ENCODE measurements at regions of chr3 and their contacts with region 1.

Region 1: DNA sequence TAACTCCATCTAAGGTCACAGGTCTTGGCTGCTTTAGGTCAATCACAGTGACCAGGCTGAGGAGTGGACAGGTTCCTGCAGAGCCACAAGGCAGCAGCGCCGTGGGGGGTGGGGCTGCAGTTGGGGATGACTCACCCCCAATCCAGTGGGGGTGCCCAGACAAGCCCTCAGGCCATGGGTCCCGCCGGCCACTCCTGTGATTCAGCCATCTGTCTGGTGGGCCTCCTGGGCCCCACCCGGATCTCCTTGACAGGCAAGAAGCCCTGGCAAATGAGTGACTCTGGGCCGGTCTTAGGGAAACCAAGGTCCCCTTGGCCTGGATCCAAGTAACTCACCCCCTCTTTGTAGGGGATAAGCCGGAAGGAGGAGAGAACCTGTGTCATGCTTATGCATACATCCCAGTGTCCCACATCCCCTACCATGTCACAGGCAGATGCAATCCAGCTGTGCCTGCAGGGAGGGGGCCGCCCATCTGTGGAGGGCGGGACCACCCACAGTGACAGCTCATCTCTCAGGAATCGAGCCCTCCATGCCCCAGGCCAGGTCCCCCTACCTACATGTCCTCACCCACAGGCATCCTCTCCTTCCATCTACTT is 495 bp upstream of the COL7A1 start:
- DNase-seq: peak; percentile 85
- H3K4me3 Mint-ChIP-seq: peak overlapping the region; percentile 48
- H3K27ac Mint-ChIP-seq: peak overlapping the region; percentile 68
- H3K4me1 Mint-ChIP-seq: peaks cover 51% of the 10 kb centered on the region
- H3K27me3 Mint-ChIP-seq: no peaks in the 10 kb centered on the region
- CTCF ChIP-seq: no peak

Region 2: DNA sequence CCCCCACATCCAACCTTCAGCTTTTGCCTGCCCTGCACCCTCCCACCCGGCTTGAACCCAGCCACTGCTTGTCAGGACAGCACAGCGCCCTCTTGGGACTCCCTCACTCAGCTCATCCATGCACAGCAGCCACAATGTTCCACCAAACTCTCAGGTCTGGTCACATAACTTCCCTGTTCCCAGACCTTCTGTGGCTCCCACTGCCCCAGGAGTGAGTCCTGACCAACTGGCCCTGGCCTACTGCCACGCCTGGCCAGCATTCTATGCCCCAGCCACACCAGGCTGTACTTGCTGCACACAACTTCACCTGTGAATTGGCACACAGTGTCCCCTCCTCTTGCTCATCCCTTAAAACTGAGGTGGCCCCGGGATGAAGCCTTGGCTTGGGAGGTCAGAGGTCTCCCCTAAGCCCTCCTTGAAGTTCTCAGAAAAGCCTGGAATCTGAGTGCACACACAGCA is 186.8 kb before region 1 on chr3:
- CTCF ChIA-PET with region 1: no interaction called
- POLR2A ChIA-PET with region 1: no interaction called
- intact Hi-C with region 1: no loop called
- DNase-seq: no peak
- H3K4me3 Mint-ChIP-seq: no peak overlapping the region
- H3K27ac Mint-ChIP-seq: peak overlapping the region; percentile 49
- H3K4me1 Mint-ChIP-seq: peaks cover 16% of the 10 kb centered on the region
- H3K27me3 Mint-ChIP-seq: no peaks in the 10 kb centered on the region
- CTCF ChIP-seq: no peak

Region 3: GRCh38 chr3:48446425-48447193 is 149.0 kb before region 1 on chr3 and contains the start of gene ATRIP:
- CTCF ChIA-PET with region 1: no interaction called
- POLR2A ChIA-PET with region 1: interaction called, 15 read pairs
- intact Hi-C with region 1: no loop called
- DNase-seq: peak; percentile 87
- H3K4me3 Mint-ChIP-seq: peak within 1 kb of the TSS; percentile 96
- H3K27ac Mint-ChIP-seq: peak within 1 kb of the TSS; percentile 73
- H3K4me1 Mint-ChIP-seq: peaks cover 25% of the 10 kb centered on the region
- H3K27me3 Mint-ChIP-seq: no peaks in the 10 kb centered on the region
- CTCF ChIP-seq: no peak
- total RNA-seq, gene ATRIP: 8.6 and 9.1 TPM in 2 replicates

Region 4: GRCh38 chr3:48564017-48564416 is 31.6 kb before region 1 on chr3:
- CTCF ChIA-PET with region 1: interaction called, 11 read pairs
- POLR2A ChIA-PET with region 1: interaction called, 38 read pairs
- intact Hi-C with region 1: no loop called
- DNase-seq: peak; percentile 73
- H3K4me3 Mint-ChIP-seq: no peak overlapping the region
- H3K27ac Mint-ChIP-seq: peak overlapping the region; percentile 46
- H3K4me1 Mint-ChIP-seq: peaks cover 39% of the 10 kb centered on the region
- H3K27me3 Mint-ChIP-seq: no peaks in the 10 kb centered on the region
- CTCF ChIP-seq: no peak

Region 5: DNA sequence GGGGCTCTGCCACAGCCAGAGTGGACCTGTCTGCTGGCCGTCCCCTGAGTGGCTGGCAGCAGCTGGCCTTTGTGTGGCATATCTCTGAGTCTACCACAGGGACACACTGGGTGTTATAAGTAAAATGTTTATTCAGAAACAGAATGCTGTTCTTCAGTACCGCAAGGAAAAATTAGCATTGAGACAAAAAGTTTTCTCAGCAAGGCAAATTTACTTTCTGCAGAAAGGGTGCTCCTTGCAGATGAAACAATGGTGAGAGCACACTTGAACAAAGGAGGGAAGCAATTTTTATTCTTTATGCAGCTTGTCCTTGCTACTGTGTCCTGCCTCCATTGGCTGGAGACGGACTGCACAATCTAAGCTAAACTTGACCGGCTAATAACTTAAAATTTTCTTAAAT is 21.9 kb after region 1 on chr3:
- CTCF ChIA-PET with region 1: interaction called, 3 read pairs
- POLR2A ChIA-PET with region 1: interaction called, 107 read pairs
- intact Hi-C with region 1: no loop called
- DNase-seq: no peak
- H3K4me3 Mint-ChIP-seq: no peak overlapping the region
- H3K27ac Mint-ChIP-seq: peak overlapping the region; percentile 96
- H3K4me1 Mint-ChIP-seq: peaks cover 31% of the 10 kb centered on the region
- H3K27me3 Mint-ChIP-seq: no peaks in the 10 kb centered on the region
- CTCF ChIP-seq: no peak

Region 6: DNA sequence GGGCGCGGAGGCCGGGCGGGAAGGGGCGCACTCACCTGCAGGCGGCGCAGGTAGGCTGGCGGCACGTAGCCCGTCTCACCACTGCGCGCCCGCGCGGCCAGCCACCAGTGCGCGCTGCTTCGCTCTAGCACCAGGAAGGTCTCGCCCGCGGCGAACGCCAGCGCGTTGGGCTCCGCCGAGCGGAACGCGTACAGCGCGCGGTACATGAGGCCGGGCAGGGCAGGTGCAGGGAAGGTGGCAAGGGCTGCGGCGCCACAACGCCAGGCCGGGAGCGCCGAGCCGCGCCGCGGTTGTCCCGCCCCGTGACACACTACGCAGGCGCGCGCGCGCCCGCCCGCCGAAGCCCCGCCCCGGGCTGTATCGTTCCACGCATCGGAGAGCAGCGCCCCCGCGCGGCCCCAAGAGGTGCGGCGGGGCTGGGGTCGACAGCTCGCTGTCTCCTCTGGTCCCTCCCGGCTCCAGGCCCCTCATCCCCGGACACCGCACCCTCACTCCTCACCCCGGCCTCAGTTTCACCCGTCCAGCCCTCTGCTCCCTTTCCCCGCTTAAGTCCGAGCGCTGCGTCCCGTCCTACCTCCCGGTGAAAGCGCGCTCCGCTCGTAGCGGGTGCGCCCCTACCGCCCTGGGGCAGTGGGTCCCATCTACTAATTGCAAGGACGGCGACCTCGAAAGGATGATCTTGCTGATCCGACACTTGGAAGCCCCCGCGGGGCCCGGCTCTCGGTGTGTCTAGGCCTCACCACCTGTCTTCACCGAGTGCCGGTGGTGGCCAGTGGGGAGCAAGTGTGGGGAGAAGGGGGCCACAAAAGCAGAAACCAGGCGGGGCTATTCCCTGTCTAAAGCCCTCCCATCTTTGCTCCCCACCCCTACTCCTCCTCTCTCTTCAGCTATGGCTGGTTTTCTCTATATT is 90.2 kb after region 1 on chr3 and contains the start of gene NCKIPSD:
- CTCF ChIA-PET with region 1: interaction called, 3 read pairs
- POLR2A ChIA-PET with region 1: interaction called, 10 read pairs
- intact Hi-C with region 1: no loop called
- DNase-seq: peak; percentile 85
- H3K4me3 Mint-ChIP-seq: peak within 1 kb of the TSS; percentile 73
- H3K27ac Mint-ChIP-seq: peak within 1 kb of the TSS; percentile 85
- H3K4me1 Mint-ChIP-seq: peaks cover 31% of the 10 kb centered on the region
- H3K27me3 Mint-ChIP-seq: no peaks in the 10 kb centered on the region
- CTCF ChIP-seq: peak; percentile 63
- total RNA-seq, gene NCKIPSD: 23.8 and 26.9 TPM in 2 replicates

Region 7: DNA sequence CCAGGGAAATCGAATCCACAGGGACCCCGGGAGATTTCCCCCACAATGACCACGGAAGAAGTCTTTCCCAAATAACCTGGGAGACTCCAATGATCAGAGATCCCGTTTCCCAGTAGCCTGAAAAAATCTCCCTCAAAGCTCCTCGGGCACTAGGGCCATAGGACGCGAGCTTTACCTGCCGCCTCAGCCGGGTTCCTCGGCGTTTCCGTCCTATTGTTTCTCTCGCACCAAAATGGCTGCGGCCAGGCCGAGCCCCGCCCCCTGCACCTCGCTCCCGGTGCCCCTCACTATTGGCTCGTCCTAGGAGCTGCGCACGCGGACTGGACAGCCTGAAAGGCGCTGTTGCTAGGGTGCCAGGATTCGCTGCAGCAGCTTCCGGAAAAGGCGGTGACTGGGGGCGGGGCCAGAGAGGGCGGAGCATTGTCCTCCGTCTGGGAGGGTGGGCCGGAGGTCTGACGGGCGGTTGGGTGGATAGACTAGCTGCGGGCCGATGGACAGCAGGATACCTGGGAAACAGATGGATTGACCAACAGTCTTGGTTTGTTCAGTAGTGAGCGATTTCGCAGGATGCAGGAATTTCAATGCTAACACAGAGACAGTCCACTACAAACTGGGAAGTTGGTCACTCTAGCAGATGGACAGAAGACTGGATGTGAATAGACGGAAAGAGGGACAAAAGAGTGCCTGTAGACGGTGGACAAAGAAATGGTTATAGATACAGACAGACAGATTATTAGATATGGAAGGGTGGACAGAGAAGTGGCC is 121.5 kb after region 1 on chr3 and contains the start of gene IP6K2:
- CTCF ChIA-PET with region 1: no interaction called
- POLR2A ChIA-PET with region 1: interaction called, 22 read pairs
- intact Hi-C with region 1: no loop called
- DNase-seq: peak; percentile 98
- H3K4me3 Mint-ChIP-seq: peak within 1 kb of the TSS; percentile 93
- H3K27ac Mint-ChIP-seq: peak within 1 kb of the TSS; percentile 98
- H3K4me1 Mint-ChIP-seq: peaks cover 12% of the 10 kb centered on the region
- H3K27me3 Mint-ChIP-seq: no peaks in the 10 kb centered on the region
- CTCF ChIP-seq: no peak
- total RNA-seq, gene IP6K2: 99.3 and 117 TPM in 2 replicates